ENCODE measurements at regions of chr3 and their contacts with region 1.

Region 1: DNA sequence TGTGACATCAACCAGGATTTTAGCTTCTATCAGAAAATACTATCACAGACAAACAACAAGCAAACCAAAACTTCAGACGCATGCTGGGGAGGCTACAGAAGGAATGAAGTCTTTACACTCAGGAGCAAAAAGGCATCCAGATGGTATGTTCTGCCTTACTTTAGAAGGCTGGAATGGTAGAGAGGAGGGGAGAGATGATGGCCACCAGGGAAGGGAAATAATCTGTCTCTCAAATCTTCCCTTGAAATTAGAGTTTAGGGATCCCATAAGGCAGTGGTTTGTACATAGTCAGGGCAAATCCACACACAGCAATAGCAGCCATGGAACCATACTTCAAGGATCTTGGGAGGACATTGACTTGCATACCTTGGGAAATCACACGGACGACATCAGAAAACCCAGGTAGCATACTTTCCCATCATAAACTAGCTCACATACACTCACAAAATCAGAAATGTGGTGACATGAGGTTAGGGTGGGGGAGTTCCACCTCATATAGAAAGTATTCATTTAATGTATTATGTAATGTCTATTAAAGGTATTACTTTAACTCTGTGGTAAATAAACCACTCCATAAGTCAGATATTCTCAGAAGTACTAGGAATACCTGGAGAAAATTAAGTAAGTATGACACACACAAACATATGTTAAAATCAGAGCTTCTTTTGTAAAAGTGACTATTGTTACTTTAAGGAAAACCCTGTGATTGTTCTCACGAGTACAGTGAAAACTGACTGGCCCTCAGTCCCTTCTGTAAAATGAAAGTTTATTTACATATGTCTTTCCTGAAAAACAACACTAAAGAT is 9.4 kb downstream of the BTLA start:
- DNase-seq: peak in 1 of 9 donors; percentile 30
- ATAC-seq: peak; percentile 59
- H3K4me3 ChIP-seq: no peak overlapping the region
- H3K4me3 Mint-ChIP-seq: peak overlapping the region; percentile 22 to 96 (median 70)
- H3K27ac ChIP-seq: peak overlapping the region; percentile 10
- H3K27ac Mint-ChIP-seq: peak overlapping the region; percentile 65 to 99 (median 90)
- H3K4me1 ChIP-seq: peaks cover 8 to 32% of the 10 kb centered on the region in 2 donors
- H3K4me1 Mint-ChIP-seq: peaks cover 31 to 94% (median 70%) of the 10 kb centered on the region in 7 donors
- H3K27me3 ChIP-seq: no peaks in the 10 kb centered on the region
- H3K27me3 Mint-ChIP-seq: no peaks in the 10 kb centered on the region

Region 2: GRCh38 chr3:112473212-112473640 is 16.7 kb before region 1 on chr3:
- CTCF ChIA-PET with region 1: no interaction called
- POLR2A ChIA-PET with region 1: interaction called, 5 read pairs
- intact Hi-C with region 1: loop called (anchors 2 kb)
- DNase-seq: peak in 6 of 9 donors; percentile 15 to 45 (median 24)
- ATAC-seq: peak; percentile 81
- H3K4me3 ChIP-seq: no peak overlapping the region
- H3K4me3 Mint-ChIP-seq: peak overlapping the region; percentile 70 to 86 (median 82)
- H3K27ac ChIP-seq: peak overlapping the region; percentile 20
- H3K27ac Mint-ChIP-seq: peak overlapping the region; percentile 81 to 96 (median 91)
- H3K4me1 ChIP-seq: peaks cover 32 to 58% of the 10 kb centered on the region in 2 donors
- H3K4me1 Mint-ChIP-seq: peaks cover 58 to 98% (median 78%) of the 10 kb centered on the region in 7 donors
- H3K27me3 ChIP-seq: no peaks in the 10 kb centered on the region
- H3K27me3 Mint-ChIP-seq: no peaks in the 10 kb centered on the region

Region 3: GRCh38 chr3:112505907-112506306 is 16.0 kb after region 1 on chr3:
- CTCF ChIA-PET with region 1: no interaction called
- POLR2A ChIA-PET with region 1: interaction called, 30 read pairs
- intact Hi-C with region 1: loop called in 1 of 2 experiments (anchors 2 kb)
- DNase-seq: no peak
- ATAC-seq: no peak
- H3K4me3 ChIP-seq: no peak overlapping the region
- H3K4me3 Mint-ChIP-seq: no peak overlapping the region
- H3K27ac ChIP-seq: no peak overlapping the region
- H3K27ac Mint-ChIP-seq: no peak overlapping the region
- H3K4me1 ChIP-seq: no peaks in the 10 kb centered on the region
- H3K4me1 Mint-ChIP-seq: peaks cover 12 to 49% (median 33%) of the 10 kb centered on the region in 7 donors
- H3K27me3 ChIP-seq: no peaks in the 10 kb centered on the region
- H3K27me3 Mint-ChIP-seq: no peaks in the 10 kb centered on the region

Measured in naive thymus-derived CD4-positive, alpha-beta T cell (primary cell).